Mammary epithelial cell (primary cell): ENCODE measurements at regions of chr6 and their contacts with region 1.

Region 1: GRCh38 chr6:37731888-37732287 is 34.2 kb upstream of the MDGA1 start:
- DNase-seq: no peak
- H3K4me3 ChIP-seq: no peak overlapping the region
- H3K27ac ChIP-seq: no peak overlapping the region
- H3K4me1 ChIP-seq: no peaks in the 10 kb centered on the region
- H3K27me3 ChIP-seq: no peaks in the 10 kb centered on the region
- CTCF ChIP-seq: no peak

Region 2: DNA sequence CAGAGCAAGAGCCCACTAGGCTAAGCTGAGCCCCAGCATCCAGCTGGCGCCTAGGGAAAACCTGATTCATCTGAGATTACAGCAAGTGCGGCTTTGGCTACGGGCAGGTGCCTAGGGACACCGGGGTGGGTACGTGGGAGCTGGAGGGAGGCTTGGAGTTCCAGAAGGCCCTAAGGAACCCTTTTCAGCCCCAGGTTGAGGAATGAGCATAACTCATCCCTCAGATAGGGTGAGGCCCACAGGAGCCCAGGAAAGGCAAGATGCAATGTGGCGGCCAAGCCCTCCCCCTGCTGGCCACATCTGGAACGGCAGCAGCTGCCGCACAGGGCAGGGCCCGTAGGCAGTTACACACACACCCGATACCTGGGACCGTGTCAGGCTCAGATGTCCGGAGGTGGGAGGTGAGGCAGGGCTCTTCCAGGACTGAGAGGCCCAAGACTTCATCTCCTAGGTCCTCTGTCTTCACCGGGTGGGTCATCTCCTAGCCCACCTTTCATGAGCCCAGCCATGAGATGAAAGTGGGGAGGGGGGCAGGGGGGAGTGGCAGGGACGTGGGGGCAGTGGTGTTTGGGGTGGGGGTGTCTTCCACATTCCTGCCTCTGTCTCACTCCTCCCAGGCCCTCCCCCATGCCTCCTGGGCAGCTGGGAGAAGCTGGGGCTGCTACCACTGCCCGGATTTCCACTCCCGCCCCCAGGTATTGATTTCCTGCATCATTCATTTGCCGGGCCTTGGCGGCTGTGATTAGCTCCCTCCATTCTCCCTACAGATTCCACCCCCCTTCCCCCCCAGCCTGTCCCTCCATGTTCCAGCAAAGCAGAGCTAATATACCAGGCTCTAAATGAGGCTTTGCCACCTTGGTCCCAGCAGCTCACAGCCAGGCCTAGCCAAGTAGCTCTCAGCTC is 39.7 kb before region 1 on chr6:
- CTCF ChIA-PET with region 1: no interaction called
- dilution Hi-C with region 1: no loop called
- in situ Hi-C with region 1: no loop called
- intact Hi-C with region 1: no loop called
- DNase-seq: peak; percentile 70
- H3K4me3 ChIP-seq: no peak overlapping the region
- H3K27ac ChIP-seq: no peak overlapping the region
- H3K4me1 ChIP-seq: peaks cover 25% of the 10 kb centered on the region
- H3K27me3 ChIP-seq: no peaks in the 10 kb centered on the region
- CTCF ChIP-seq: peak; percentile 97 to 98

Region 3: DNA sequence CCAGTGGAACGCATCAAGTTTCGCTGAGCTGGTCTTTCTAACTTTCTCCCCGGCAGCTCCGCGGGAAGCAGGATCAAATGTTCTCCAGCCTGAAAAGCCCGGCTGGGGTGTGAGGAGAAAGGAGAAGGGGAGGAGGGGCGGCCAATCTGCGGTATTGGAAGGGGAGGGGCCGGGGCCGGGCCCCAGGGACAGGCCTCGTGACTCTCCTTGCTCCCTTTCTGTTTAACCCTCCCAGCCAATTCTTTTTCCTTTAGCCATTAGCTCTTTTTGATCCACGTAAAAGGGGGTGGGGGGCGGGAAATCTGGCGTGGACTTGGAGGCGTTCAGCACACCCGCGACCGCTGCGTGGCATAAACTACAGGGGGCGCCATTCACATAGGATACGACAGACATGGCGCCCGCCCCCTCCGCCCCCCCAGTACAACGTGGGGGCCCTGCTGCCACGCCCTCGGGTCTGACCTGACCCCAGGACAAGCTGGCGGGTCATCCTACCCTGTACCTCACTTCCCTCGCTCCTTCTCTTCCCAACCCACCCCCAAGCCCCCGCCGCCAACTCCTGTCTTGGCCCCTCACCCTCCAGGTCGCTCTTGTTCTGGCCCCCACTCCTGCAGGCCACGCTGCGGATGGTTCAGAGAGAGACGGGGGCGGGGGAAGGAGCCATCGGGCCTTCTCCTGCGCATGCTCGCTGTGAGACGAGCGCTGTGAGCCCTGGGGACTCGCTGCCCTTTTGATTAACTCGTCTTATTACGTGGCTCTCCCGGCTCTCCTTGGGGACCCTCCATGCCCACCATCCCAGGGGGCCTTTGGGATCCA is 26.4 kb before region 1 on chr6:
- CTCF ChIA-PET with region 1: no interaction called
- dilution Hi-C with region 1: no loop called
- in situ Hi-C with region 1: no loop called
- intact Hi-C with region 1: no loop called
- DNase-seq: peak; percentile 17
- H3K4me3 ChIP-seq: peak overlapping the region; percentile 26 to 33 (median 29)
- H3K27ac ChIP-seq: no peak overlapping the region
- H3K4me1 ChIP-seq: peaks cover 4% of the 10 kb centered on the region
- H3K27me3 ChIP-seq: no peaks in the 10 kb centered on the region
- CTCF ChIP-seq: peak; percentile 26 to 66

Region 4: GRCh38 chr6:37761554-37762263 is 29.8 kb after region 1 on chr6:
- CTCF ChIA-PET with region 1: no interaction called
- dilution Hi-C with region 1: no loop called
- in situ Hi-C with region 1: no loop called
- intact Hi-C with region 1: no loop called
- DNase-seq: no peak
- H3K4me3 ChIP-seq: no peak overlapping the region
- H3K27ac ChIP-seq: no peak overlapping the region
- H3K4me1 ChIP-seq: no peaks in the 10 kb centered on the region
- H3K27me3 ChIP-seq: no peaks in the 10 kb centered on the region
- CTCF ChIP-seq: no peak

Region 5: GRCh38 chr6:37783856-37784584 is 52.1 kb after region 1 on chr6:
- CTCF ChIA-PET with region 1: no interaction called
- dilution Hi-C with region 1: loop called (anchors 5 kb)
- in situ Hi-C with region 1: no loop called
- intact Hi-C with region 1: no loop called
- DNase-seq: no peak
- H3K4me3 ChIP-seq: peak overlapping the region in 2 of 3 experiments; percentile 22 to 34
- H3K27ac ChIP-seq: no peak overlapping the region
- H3K4me1 ChIP-seq: peaks cover 36% of the 10 kb centered on the region
- H3K27me3 ChIP-seq: no peaks in the 10 kb centered on the region
- CTCF ChIP-seq: no peak

Region 6: DNA sequence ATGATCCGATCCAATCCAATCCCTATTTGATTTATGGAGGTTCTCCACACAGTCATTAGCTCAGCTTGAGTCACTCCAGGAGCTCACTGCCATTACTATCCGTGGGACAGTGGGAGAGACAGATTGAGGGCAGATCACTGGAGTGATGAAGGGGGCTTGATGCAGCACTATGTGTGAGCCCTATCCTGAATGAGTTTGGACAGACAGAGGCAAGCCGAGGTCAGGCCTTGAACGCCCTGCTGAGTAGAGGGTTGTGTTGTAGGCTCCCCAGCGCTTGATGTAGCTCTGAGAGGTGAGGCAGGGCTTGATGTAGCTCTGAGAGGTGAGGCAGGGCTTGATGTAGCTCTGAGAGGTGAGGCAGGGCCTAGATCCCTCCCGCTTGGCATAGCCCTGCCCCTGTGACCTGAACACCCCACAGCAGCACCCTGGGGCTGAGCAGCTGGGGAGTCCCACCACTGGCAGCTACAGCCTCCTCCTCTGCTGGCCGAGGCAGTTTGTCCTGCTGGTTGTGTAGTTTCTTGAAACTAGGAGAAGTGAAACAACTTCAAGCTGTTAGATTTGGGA is 146.3 kb after region 1 on chr6:
- CTCF ChIA-PET with region 1: no interaction called
- dilution Hi-C with region 1: no loop called
- in situ Hi-C with region 1: no loop called
- intact Hi-C with region 1: no loop called
- DNase-seq: no peak
- H3K4me3 ChIP-seq: no peak overlapping the region
- H3K27ac ChIP-seq: no peak overlapping the region
- H3K4me1 ChIP-seq: peaks cover 6% of the 10 kb centered on the region
- H3K27me3 ChIP-seq: no peaks in the 10 kb centered on the region
- CTCF ChIP-seq: no peak